ENCODE measurements at regions of chr1 and their contacts with region 1.

Region 1: GRCh38 chr1:232142403-232143314 is 487.3 kb downstream of the SIPA1L2 start:
- DNase-seq: peak; percentile 21
- H3K4me3 ChIP-seq: no peak overlapping the region
- H3K27ac ChIP-seq: no peak overlapping the region
- H3K4me1 ChIP-seq: no peaks in the 10 kb centered on the region
- H3K27me3 ChIP-seq: no peaks in the 10 kb centered on the region
- CTCF ChIP-seq: no peak
- POLR2A ChIP-seq: no peak

Region 2: GRCh38 chr1:232292818-232293217 is 150.2 kb after region 1 on chr1:
- intact Hi-C with region 1: loop called (anchors 10 kb)
- DNase-seq: no peak
- H3K4me3 ChIP-seq: no peak overlapping the region
- H3K27ac ChIP-seq: no peak overlapping the region
- H3K4me1 ChIP-seq: no peaks in the 10 kb centered on the region
- H3K27me3 ChIP-seq: no peaks in the 10 kb centered on the region
- CTCF ChIP-seq: no peak
- POLR2A ChIP-seq: no peak

Measured in prostate gland (tissue), 2 donors.